ENCODE measurements at regions of chrX and their contacts with region 1.

Region 1: DNA sequence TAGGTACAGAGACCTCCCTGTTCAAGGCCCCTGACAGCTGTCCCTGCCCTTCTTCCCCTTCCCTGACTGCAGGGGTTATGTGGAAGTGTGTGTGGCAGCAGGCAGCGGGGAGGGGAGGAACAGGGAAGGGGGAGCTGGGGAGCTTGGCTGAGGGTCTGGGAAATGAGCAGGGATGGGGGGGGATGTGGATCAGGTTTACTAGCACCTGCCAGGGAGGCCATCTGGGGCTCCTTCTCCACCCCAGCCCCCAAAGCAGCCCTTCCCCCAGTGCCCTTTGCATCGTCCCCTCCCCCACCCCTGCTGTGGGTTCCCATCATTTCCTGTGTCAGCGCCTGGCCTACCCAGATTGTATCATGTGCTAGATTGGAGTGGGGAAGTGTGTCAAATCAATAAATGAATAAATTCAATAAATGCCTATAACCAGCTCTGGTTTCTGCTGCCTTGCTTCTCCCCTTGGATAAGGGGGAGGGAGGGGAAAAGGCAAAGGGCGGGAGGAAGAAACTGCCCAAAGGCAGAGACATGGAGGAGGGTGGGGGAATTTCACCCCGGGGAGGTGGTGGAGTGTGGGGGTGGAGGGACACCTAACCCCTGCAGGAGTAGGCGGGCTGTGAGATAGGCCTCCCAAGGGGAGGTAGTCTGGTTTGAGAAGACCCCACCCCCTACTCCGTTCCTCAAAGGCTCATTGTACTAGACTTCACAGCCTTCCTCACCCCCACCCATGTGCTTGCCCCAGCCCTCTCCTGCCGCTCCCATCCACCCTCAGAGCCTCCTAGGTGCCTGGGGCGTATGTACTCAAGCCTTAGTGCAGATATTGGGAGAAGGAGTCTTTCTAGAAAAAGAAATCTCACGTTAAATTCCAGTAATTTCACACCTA is 3.2 kb downstream of the CXorf65 start:
- DNase-seq: peak; percentile 80
- ATAC-seq: peak; percentile 50
- H3K4me3 Mint-ChIP-seq: peak overlapping the region; percentile 77
- H3K27ac Mint-ChIP-seq: peak overlapping the region; percentile 87
- H3K4me1 Mint-ChIP-seq: peaks cover 77% of the 10 kb centered on the region
- H3K27me3 Mint-ChIP-seq: no peaks in the 10 kb centered on the region
- CTCF ChIP-seq: no peak

Region 2: GRCh38 chrX:71118032-71118984 is 15.0 kb after region 1 on chrX and contains the start of gene MED12:
- CTCF ChIA-PET with region 1: interaction called, 19 read pairs
- POLR2A ChIA-PET with region 1: interaction called, 43 read pairs
- intact Hi-C with region 1: no loop called
- DNase-seq: peak; percentile 92
- ATAC-seq: peak; percentile 99
- H3K4me3 Mint-ChIP-seq: peak within 1 kb of the TSS; percentile 79
- H3K27ac Mint-ChIP-seq: peak within 1 kb of the TSS; percentile 85
- H3K4me1 Mint-ChIP-seq: peaks cover 28% of the 10 kb centered on the region
- H3K27me3 Mint-ChIP-seq: no peaks in the 10 kb centered on the region
- CTCF ChIP-seq: no peak
- total RNA-seq, gene MED12: 49.2 to 52.0 TPM

Region 3: DNA sequence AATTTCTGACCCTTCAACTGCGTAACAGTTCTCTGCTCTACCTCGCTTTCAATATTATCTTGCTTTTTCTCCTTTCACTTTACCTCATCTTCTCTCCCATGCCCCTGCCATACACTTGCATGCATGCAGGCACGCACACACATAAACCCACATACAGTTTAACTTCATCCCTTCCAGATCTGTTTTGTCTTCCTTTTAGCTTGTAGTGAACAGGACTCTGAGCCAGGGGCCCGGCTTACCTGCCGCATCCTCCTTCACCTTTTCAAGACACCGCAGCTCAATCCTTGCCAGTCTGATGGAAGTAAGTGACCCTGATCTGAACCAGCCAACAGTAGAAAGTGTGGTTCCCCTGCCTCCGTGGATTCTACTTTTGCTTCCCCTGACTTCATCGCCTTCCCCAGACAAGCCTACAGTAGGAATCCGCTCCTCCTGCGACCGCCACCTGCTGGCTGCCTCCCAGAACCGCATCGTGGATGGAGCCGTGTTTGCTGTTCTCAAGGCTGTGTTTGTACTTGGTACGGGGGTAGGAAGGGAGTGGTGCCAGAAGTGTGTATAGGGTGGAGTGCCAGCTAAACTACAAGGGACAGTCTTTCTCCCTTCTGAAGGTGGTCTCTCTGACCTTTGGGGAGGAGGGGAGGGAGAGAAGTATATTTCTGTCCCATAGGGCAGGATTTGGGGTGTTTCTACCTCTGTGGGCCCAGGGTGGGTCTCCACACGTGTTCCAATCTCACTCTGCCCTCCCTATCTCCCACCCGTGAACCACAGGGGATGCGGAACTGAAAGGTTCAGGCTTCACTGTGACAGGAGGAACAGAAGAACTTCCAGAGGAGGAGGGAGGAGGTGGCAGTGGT is 25.8 kb after region 1 on chrX:
- CTCF ChIA-PET with region 1: interaction called, 62 read pairs
- POLR2A ChIA-PET with region 1: interaction called, 4 read pairs
- intact Hi-C with region 1: no loop called
- DNase-seq: peak; percentile 77
- ATAC-seq: peak; percentile 93
- H3K4me3 Mint-ChIP-seq: peak overlapping the region; percentile 63
- H3K27ac Mint-ChIP-seq: peak overlapping the region; percentile 75
- H3K4me1 Mint-ChIP-seq: peaks cover 21% of the 10 kb centered on the region
- H3K27me3 Mint-ChIP-seq: no peaks in the 10 kb centered on the region
- CTCF ChIP-seq: peak; percentile 68

Region 4: DNA sequence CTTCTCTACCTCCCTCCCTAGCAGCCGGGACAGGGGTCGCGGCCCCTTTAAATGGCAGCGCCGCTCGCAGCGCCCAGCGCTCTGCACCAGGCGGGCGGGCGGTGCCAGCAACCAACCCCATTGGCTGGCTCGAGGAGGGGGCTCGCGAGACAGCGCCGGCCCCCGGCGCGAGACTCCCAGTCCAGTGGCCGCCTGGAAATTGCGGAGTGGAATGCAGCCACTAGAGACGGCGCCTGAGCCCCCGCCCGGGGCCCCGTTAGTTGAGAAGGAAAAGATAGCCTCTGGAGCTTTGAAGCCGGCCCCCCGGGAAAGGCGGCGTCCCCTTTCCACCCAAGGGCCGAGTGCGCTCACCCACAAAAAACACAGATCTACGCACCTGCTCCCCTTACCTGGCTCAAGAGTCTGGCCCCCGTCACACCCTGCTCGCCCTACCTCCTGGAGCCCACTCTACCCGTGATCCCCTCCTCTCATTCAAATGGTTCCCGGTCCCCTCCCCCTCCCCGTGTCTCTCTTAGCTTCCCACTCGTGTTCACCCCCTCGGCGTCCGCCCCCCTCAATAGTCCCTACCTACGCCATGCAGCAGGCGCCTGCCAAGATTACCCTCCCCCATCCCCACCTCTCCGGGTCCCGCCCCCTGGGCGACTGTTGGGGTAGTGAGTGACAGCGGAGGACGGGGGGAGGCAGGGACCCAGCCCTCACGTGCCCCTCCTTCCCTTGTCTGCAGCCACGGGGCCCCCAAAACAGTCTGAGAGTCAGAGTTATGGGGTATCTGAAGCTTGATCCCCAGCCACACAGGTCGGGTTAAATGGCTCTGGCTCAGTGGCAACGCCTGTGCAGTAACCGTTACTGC is 151.0 kb after region 1 on chrX and contains the start of gene ZMYM3:
- CTCF ChIA-PET with region 1: no interaction called
- POLR2A ChIA-PET with region 1: no interaction called
- intact Hi-C with region 1: loop called (anchors 10 kb)
- DNase-seq: peak; percentile 86
- ATAC-seq: peak; percentile 88
- H3K4me3 Mint-ChIP-seq: peak within 1 kb of the TSS; percentile 89
- H3K27ac Mint-ChIP-seq: peak within 1 kb of the TSS; percentile 91
- H3K4me1 Mint-ChIP-seq: peaks cover 32% of the 10 kb centered on the region
- H3K27me3 Mint-ChIP-seq: no peaks in the 10 kb centered on the region
- CTCF ChIP-seq: no peak
- total RNA-seq, gene ZMYM3: 25.8 to 27.5 TPM